Activated CD4-positive, alpha-beta T cell treated with anti-CD3 and anti-CD28 coated beads for 36 hours (primary cell): ENCODE measurements at regions of chr1 and their contacts with region 1.

Region 1: GRCh38 chr1:21176586-21177555 is at the start of gene EIF4G3:
- DNase-seq: peak; percentile 100
- ATAC-seq: peak; percentile 99
- H3K4me3 Mint-ChIP-seq: peak within 1 kb of the TSS; percentile 81
- H3K27ac Mint-ChIP-seq: peak within 1 kb of the TSS; percentile 92
- H3K4me1 Mint-ChIP-seq: peaks cover 25% of the 10 kb centered on the region
- H3K27me3 Mint-ChIP-seq: no peaks in the 10 kb centered on the region
- total RNA-seq, gene EIF4G3: 47.0 to 55.0 TPM

Region 2: GRCh38 chr1:20376880-20377494 is 799.9 kb before region 1 on chr1:
- CTCF ChIA-PET with region 1: no interaction called
- POLR2A ChIA-PET with region 1: no interaction called
- intact Hi-C with region 1: no loop called
- DNase-seq: peak; percentile 82
- ATAC-seq: peak; percentile 85
- H3K4me3 Mint-ChIP-seq: no peak overlapping the region
- H3K27ac Mint-ChIP-seq: no peak overlapping the region
- H3K4me1 Mint-ChIP-seq: peaks cover 7% of the 10 kb centered on the region
- H3K27me3 Mint-ChIP-seq: peaks cover 17% of the 10 kb centered on the region

Region 3: DNA sequence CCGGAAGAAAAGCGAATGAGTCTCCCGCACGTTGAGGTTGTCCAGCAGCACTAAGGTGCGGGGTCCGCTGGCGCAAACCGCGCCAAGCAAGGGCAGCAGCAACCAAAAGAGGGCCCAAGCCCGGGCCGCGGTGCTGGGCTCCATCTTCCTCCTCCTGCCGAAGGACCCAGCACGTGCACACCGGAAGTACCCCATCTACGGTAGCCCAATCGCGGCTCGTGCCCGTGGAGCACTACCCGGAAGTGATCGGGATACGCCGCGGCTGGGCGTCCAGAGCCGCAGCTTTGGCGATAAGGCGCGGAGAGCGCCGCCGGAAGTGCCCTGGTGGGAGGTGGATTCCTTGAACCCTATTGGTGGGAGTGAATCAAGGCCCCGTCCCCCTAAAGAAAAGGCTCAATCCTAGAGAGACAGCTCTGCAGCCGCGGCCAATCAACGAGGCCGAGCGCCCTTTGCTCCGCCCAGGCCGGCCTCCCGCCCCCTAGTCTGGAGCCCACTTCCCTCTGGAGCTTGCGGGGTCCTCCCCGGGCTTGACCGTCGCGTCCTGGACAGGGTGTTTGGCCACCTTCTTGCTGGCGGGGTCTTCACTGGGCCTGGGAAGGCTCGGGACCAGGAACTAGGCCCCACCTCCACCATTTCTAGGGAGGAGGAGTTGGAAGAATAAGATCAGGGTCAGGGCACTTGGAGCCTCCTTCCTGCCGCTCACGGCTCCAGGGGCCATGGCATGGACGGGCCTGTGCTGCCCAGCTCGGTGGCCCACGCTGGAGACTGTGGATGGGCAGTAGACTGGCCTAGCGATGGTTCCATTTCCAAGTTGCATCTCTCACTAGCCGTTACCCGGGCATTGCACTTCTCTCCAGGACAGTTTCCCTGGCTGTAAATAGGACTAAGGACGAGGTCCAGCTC is 515.4 kb before region 1 on chr1 and contains the start of gene DDOST:
- CTCF ChIA-PET with region 1: interaction called, 4 read pairs
- POLR2A ChIA-PET with region 1: no interaction called
- intact Hi-C with region 1: loop called in 1 of 2 experiments (anchors 1 kb)
- DNase-seq: peak; percentile 97
- ATAC-seq: peak; percentile 97
- H3K4me3 Mint-ChIP-seq: peak within 1 kb of the TSS; percentile 91
- H3K27ac Mint-ChIP-seq: peak within 1 kb of the TSS; percentile 100
- H3K4me1 Mint-ChIP-seq: peaks cover 35% of the 10 kb centered on the region
- H3K27me3 Mint-ChIP-seq: no peaks in the 10 kb centered on the region
- total RNA-seq, gene DDOST: 112 to 136 TPM

Region 4: GRCh38 chr1:20732588-20733360 is 444.1 kb before region 1 on chr1 and contains the start of gene SH2D5:
- CTCF ChIA-PET with region 1: no interaction called
- POLR2A ChIA-PET with region 1: no interaction called
- intact Hi-C with region 1: loop called in 1 of 2 experiments (anchors 2 kb)
- DNase-seq: peak; percentile 87
- ATAC-seq: peak; percentile 88
- H3K4me3 Mint-ChIP-seq: peak within 1 kb of the TSS; percentile 74
- H3K27ac Mint-ChIP-seq: peak within 1 kb of the TSS; percentile 69
- H3K4me1 Mint-ChIP-seq: peaks cover 17% of the 10 kb centered on the region
- H3K27me3 Mint-ChIP-seq: peaks cover 21% of the 10 kb centered on the region
- total RNA-seq, gene SH2D5: 0.32 to 0.51 TPM

Region 5: DNA sequence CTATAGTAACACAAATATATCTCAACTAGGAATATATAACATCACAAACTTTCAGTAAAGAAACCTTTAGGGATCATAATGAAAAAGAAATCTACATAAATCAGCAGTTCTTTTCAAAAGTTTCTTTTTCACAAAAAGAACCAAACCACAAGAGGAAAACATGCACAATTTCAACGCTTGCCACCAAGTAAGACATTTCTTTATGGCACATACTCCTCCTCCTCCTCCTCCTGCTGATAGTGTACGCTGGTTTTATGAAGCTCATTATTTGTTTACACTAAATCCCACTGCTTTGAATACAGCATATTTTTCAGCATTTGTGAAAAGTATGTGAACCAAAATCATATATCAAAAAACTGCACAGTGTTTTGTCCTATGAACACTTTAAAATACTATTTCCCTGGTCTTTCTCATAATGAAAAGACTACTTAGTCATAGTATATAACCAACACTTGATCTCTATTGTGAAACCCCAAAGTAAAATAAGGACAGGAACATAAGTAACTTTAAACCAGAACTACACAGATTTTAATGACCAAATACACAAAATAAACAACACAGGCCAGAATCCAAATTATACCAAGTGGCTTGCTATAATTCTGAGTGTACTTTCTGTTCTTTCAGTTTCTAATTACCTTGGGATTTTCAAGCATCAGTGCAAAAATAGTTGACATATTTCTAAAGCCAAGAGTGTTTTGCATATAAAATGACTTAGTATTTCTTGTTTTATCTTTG is 184.4 kb before region 1 on chr1:
- CTCF ChIA-PET with region 1: interaction called, 5 read pairs
- POLR2A ChIA-PET with region 1: no interaction called
- intact Hi-C with region 1: loop called in 1 of 2 experiments (anchors 10 kb)
- DNase-seq: no peak
- ATAC-seq: peak; percentile 86
- H3K4me3 Mint-ChIP-seq: no peak overlapping the region
- H3K27ac Mint-ChIP-seq: peak overlapping the region; percentile 84
- H3K4me1 Mint-ChIP-seq: peaks cover 22% of the 10 kb centered on the region
- H3K27me3 Mint-ChIP-seq: no peaks in the 10 kb centered on the region

Region 6: GRCh38 chr1:21077085-21077484 is 99.8 kb before region 1 on chr1:
- CTCF ChIA-PET with region 1: no interaction called
- POLR2A ChIA-PET with region 1: no interaction called
- intact Hi-C with region 1: no loop called
- DNase-seq: no peak
- ATAC-seq: no peak
- H3K4me3 Mint-ChIP-seq: no peak overlapping the region
- H3K27ac Mint-ChIP-seq: no peak overlapping the region
- H3K4me1 Mint-ChIP-seq: peaks cover 4% of the 10 kb centered on the region
- H3K27me3 Mint-ChIP-seq: no peaks in the 10 kb centered on the region

Region 7: GRCh38 chr1:21200767-21201166 is 23.9 kb after region 1 on chr1:
- CTCF ChIA-PET with region 1: interaction called, 14 read pairs
- POLR2A ChIA-PET with region 1: no interaction called
- intact Hi-C with region 1: no loop called
- DNase-seq: no peak
- ATAC-seq: no peak
- H3K4me3 Mint-ChIP-seq: no peak overlapping the region
- H3K27ac Mint-ChIP-seq: no peak overlapping the region
- H3K4me1 Mint-ChIP-seq: no peaks in the 10 kb centered on the region
- H3K27me3 Mint-ChIP-seq: peaks cover 8% of the 10 kb centered on the region

Region 8: DNA sequence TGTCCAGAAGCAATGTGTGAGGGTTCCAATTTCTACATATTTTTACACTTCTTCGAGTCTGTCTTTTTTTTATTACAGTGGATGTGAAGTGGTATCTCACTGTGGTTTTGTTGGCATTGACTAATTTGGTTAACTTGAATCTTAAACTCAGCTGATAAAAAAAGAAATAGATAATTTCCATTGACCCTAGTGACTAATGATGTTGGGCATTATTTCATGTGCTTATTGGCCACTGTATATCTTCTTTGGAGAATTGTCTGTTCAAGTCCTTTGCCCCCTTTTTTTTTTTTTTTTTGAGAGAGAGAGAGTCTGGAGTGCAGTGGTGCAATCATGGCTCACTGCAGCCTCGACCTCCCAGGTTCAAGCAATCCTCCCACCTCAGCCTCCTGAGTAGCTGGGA is 229.8 kb after region 1 on chr1:
- CTCF ChIA-PET with region 1: no interaction called
- POLR2A ChIA-PET with region 1: no interaction called
- intact Hi-C with region 1: no loop called
- DNase-seq: no peak
- ATAC-seq: no peak
- H3K4me3 Mint-ChIP-seq: no peak overlapping the region
- H3K27ac Mint-ChIP-seq: no peak overlapping the region
- H3K4me1 Mint-ChIP-seq: no peaks in the 10 kb centered on the region
- H3K27me3 Mint-ChIP-seq: peaks cover 2% of the 10 kb centered on the region

Region 9: DNA sequence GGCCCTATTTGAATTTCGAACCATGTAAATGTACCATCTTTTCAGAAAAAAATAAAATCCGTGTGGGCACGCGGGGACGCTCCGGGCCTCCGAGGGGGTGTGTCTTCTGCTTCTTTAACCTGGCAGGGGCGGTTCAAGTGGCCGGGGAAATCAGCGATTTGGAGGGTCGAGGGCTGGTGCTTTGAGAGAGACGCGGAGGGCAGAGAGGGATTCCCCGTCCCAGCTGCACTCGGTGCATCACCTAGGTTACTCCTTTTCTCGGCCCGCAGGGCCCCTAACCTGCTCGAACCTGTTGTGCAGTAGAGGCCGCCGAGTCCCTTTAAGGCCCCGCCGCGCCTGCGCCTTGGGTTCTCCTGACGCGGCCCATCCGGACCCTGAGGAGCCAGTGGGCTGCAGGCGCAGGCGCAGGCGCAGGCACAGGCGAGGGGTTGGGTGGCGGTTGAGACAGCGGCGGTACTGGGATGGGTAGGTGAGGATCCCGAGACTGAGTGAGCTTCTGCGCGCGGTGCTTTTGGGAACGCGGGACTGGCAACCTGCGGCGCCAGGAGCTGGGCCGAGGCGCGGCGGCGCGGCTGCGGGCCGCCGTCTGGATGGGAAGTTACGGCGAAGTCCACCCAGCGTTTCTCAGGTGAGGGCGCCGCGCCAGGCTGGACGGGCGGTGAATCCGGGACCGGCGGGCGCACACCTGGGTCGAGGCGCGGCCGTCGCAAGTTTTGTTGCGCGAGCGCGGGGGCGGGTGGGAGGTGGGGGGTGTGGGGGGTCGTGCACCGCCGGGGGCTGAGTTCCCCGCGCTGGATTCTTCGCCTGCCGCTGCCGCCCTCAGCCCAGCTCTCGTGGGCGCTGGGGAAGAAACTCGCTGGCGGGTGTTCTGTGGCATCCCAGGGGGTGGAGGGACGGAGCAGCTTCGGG is 263.1 kb after region 1 on chr1 and contains the start of gene NBPF3:
- CTCF ChIA-PET with region 1: no interaction called
- POLR2A ChIA-PET with region 1: no interaction called
- intact Hi-C with region 1: loop called in 1 of 2 experiments (anchors 2 kb)
- DNase-seq: peak; percentile 96
- ATAC-seq: peak; percentile 98
- H3K4me3 Mint-ChIP-seq: peak within 1 kb of the TSS; percentile 91
- H3K27ac Mint-ChIP-seq: peak within 1 kb of the TSS; percentile 93
- H3K4me1 Mint-ChIP-seq: peaks cover 17% of the 10 kb centered on the region
- H3K27me3 Mint-ChIP-seq: peaks cover 3% of the 10 kb centered on the region
- total RNA-seq, gene NBPF3: 8.5 to 9.9 TPM

Region 10: GRCh38 chr1:22025368-22026155 is 848.7 kb after region 1 on chr1:
- CTCF ChIA-PET with region 1: no interaction called
- POLR2A ChIA-PET with region 1: no interaction called
- intact Hi-C with region 1: loop called in 1 of 2 experiments (anchors 5 kb)
- DNase-seq: peak; percentile 94
- ATAC-seq: peak; percentile 74
- H3K4me3 Mint-ChIP-seq: peak overlapping the region; percentile 82
- H3K27ac Mint-ChIP-seq: peak overlapping the region; percentile 99
- H3K4me1 Mint-ChIP-seq: peaks cover 59% of the 10 kb centered on the region
- H3K27me3 Mint-ChIP-seq: no peaks in the 10 kb centered on the region